MCF 10A (cell line): ENCODE measurements at regions of chr1 and their contacts with region 1.

Region 1: DNA sequence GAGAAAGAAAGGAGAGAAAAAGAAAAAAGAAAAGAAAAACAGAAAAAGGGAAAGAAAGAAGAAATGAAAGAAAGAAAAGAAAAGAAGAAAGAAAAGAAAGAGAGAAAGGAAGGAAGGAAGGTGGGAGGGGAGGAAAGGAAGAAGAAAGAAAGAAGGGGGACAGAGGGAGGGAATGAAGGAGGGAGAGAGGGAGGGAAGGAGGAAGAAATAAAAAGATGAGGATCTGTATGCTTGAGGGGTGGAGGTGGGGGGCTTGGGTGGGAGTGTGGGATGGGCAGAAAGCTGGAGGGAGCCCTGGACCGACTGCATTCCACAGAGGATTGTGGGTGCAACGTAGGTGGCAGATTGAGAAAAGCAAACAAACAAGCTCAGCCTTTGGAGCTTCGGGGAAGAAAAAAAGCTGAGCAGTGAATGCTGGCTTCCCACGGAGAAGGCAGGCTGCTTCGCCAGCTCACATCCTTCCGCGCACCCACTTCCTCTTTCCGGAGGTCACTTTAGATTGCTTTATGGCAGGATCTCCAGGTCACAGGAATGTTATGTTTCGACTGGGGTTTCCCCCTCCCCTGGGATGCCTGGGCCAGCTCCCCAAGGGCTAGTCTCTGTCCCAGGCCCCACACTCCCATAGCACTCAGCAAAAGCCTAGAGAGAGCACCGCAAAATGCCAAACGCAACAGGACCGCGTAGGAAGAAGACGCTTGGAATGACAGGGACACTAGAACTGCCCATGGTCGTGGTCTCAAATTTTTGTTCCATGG is 20.7 kb upstream of the LGALS8 start:
- DNase-seq: peak; percentile 70
- H3K4me3 Mint-ChIP-seq: peak overlapping the region; percentile 12
- H3K27ac Mint-ChIP-seq: peak overlapping the region; percentile 47
- H3K4me1 Mint-ChIP-seq: peaks cover 16% of the 10 kb centered on the region
- H3K27me3 Mint-ChIP-seq: no peaks in the 10 kb centered on the region
- CTCF ChIP-seq: no peak

Region 2: GRCh38 chr1:236516929-236517704 is 14.1 kb after region 1 on chr1:
- CTCF ChIA-PET with region 1: no interaction called
- POLR2A ChIA-PET with region 1: interaction called, 16 read pairs
- intact Hi-C with region 1: no loop called
- DNase-seq: peak; percentile 76
- H3K4me3 Mint-ChIP-seq: peak overlapping the region; percentile 37
- H3K27ac Mint-ChIP-seq: peak overlapping the region; percentile 68
- H3K4me1 Mint-ChIP-seq: peaks cover 19% of the 10 kb centered on the region
- H3K27me3 Mint-ChIP-seq: no peaks in the 10 kb centered on the region
- CTCF ChIP-seq: no peak